ENCODE measurements at regions of chr7 and their contacts with region 1.

Region 1: GRCh38 chr7:43700059-43700501 is 29.2 kb downstream of the COA1 start:
- DNase-seq: no peak
- ATAC-seq: peak; percentile 73
- H3K4me3 Mint-ChIP-seq: no peak overlapping the region
- H3K27ac Mint-ChIP-seq: peak overlapping the region; percentile 47
- H3K4me1 Mint-ChIP-seq: peaks cover 66% of the 10 kb centered on the region
- H3K27me3 Mint-ChIP-seq: no peaks in the 10 kb centered on the region

Region 2: DNA sequence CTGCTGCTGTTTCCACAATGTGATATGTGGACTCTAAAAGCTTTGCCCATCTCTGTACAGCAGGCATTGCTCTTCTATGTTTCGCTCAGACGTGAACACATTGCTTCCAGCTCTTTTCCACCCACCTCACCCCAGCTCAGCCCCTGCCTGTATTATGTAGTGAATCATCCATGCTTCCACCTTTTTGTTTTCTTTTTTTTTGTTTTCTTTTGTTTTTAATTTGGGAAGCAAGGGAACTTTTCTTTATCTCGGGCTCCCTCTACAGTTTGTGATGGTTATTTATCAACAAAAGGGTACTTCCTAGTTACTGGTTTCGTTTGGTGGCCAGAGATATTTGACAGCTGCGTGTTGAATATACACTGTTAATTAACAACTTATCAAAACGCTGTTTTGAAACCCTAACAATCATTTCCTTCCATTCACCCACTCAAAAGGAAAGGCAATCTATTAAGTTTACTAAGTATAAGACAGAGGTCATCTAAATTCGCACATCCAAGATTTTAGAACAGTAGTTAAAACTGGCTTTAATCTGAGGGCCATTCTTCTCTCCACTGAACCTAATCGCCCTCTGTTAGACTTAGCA is 245.1 kb before region 1 on chr7:
- CTCF ChIA-PET with region 1: interaction called, 20 read pairs
- DNase-seq: no peak
- ATAC-seq: no peak
- H3K4me3 Mint-ChIP-seq: no peak overlapping the region
- H3K27ac Mint-ChIP-seq: no peak overlapping the region
- H3K4me1 Mint-ChIP-seq: peaks cover 8% of the 10 kb centered on the region
- H3K27me3 Mint-ChIP-seq: peaks cover 23% of the 10 kb centered on the region

Region 3: DNA sequence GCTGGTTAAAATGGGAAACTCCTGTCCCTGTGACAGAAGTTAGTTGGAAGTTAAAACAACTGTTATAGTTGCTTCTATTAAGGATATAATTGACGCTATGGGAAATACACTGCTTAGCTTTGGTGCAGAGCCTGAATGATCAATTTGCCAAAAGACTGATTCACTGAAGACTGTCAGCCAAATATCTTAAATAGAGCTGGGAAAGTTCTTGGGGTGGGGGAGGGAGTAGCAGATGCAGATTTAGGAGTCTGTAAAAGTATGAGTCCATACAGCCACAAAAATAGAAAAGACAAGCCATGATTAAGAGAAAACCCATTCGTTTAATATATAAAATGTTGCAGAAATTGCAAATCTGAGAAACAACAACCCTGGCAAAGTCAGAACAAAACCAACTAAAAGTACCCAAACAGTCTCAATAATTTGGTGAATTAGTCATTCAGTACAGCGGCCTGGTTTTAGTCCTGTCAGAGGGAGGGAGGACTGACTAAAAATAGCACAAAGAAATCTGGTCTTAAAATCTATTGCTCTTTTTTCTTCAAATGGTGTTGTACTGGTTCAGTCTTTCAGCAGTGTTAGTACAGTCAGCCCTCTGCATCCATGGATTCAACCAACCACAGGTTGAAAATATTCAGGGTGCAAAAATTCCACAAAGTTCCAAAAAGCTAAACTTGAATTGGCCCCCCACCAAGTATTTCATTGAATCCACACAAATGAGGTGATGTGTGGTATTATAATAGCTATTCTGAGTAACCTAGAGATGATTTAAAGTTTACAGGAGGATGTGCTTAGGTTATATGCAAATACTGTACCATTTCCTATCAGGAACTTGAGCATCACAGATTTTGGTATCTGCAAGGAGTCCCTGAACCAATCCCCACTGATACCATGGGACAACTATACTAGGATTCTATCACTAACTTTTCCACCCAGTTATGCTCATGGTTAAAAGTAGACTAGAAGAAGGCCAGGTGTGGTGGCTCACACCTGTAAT is 87.2 kb before region 1 on chr7:
- CTCF ChIA-PET with region 1: interaction called, 14 read pairs
- DNase-seq: peak; percentile 52
- ATAC-seq: peak; percentile 82
- H3K4me3 Mint-ChIP-seq: no peak overlapping the region
- H3K27ac Mint-ChIP-seq: peak overlapping the region; percentile 88
- H3K4me1 Mint-ChIP-seq: peaks cover 66% of the 10 kb centered on the region
- H3K27me3 Mint-ChIP-seq: no peaks in the 10 kb centered on the region

Region 4: GRCh38 chr7:43639858-43640491 is 60.1 kb before region 1 on chr7:
- CTCF ChIA-PET with region 1: interaction called, 90 read pairs
- DNase-seq: no peak
- ATAC-seq: no peak
- H3K4me3 Mint-ChIP-seq: no peak overlapping the region
- H3K27ac Mint-ChIP-seq: peak overlapping the region; percentile 64
- H3K4me1 Mint-ChIP-seq: peaks cover 75% of the 10 kb centered on the region
- H3K27me3 Mint-ChIP-seq: no peaks in the 10 kb centered on the region

Region 5: DNA sequence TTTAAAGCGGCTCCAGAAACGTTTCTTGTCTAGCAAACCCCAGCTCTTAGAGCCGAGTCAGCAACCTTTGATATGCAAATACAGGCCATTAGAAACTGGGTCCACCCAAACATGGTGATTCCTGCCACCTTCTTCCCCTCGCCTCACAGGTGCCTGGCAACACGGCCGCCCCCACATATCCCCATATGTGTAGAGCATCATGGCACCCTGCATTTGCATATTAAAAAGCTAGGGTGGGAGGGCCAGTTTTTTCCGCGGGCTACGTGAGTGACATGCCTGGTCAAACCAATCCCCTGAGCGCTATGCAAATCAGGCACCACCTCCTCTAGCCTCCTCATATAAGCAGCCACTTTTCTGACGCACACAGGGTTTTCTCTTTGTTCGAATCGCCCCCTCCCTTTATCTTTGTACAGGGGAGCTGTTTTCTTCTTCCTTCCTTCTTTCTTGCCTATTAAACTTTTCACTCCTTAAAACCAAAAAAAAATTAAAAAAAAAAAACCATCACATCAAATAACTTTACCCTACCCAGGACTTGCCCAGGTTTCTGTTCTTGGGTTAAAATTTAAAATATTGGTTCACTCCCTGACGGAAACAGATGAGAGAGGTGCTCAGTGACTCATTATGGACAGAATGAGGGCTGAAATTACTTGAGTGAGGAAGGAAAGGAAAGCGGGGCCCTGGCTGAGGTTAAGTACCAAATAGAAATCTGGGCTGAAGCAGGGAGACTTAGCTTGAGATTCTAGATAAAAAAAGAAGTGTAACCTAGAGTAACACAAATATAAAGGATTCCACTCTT is 30.6 kb before region 1 on chr7:
- CTCF ChIA-PET with region 1: interaction called, 15 read pairs
- DNase-seq: peak; percentile 91
- ATAC-seq: peak; percentile 90
- H3K4me3 Mint-ChIP-seq: peak overlapping the region; percentile 61
- H3K27ac Mint-ChIP-seq: peak overlapping the region; percentile 93
- H3K4me1 Mint-ChIP-seq: peaks cover 63% of the 10 kb centered on the region
- H3K27me3 Mint-ChIP-seq: no peaks in the 10 kb centered on the region

Region 6: DNA sequence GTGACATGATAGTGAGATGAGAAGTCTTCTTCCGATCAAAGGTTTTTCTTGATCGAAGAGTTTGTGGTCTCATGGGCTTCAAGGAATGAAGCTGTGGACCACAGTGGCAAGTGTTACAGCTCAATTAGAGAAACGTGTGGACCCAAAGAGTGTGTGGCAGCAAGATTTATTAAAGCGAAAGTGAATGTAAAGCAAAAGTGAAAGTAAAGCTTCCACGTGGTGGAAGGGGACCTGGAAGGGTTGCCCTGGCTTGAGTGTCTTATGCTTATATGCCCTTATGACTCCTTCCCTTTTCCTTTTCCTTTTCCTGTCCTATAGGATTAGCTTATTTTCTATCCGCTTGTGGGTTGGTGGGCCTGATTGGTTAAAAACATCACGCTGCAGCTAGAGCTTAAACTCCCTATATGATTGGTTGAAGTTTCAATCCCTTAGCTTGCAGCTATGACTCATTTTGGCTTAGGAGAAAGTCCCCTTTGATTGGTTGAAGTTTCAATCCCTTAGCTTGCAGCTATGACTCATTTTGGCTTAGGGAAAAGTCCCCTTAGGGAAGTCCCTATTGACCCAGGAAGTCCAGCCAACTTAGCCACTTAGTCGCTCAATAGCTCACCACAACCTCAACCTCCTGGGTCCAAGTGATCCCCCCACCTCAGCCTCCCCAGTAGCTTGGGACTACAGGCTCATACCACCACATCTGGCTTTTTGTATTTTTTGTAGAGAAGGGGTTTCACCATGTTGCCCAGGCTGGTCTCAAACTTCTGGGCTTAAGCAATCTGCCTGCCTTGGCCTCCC is 134.6 kb after region 1 on chr7:
- CTCF ChIA-PET with region 1: interaction called, 34 read pairs
- DNase-seq: peak; percentile 62
- ATAC-seq: peak; percentile 76
- H3K4me3 Mint-ChIP-seq: peak overlapping the region; percentile 78
- H3K27ac Mint-ChIP-seq: peak overlapping the region; percentile 95
- H3K4me1 Mint-ChIP-seq: peaks cover 28% of the 10 kb centered on the region
- H3K27me3 Mint-ChIP-seq: peaks cover 13% of the 10 kb centered on the region

Measured in activated CD8-positive, alpha-beta memory T cell treated with anti-CD3 and anti-CD28 coated beads, Interleukin-2, amount 10 ng/mL, durations not matched to agents 7 days and 5 days (primary cell).